ENCODE measurements at regions of chr3 and their contacts with region 1.

Region 1: DNA sequence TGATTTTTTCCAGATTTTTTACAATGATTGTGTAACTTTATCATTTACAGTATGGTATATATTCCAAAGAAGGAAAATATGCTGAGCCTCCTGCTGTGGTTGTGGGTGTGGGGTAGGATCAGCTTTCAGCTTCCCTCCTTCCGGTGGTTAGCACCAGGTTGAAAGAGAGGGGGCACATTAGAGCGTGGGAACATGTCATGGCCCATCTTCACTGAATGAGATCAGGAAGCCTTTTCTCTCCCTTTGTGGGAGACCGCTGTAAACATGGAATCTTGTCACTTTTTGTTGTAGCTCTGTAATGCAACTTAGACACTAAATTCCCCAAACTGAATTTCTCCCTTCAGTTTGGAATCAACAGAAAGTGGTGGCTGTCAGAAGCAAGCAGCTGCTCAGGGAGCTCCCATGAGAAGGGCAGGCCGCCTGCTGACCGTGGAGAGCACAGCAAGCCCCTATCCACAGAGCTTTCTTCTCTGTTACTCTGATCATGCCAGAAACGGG is 86.7 kb upstream of the LIMD1 start:
- DNase-seq: no peak
- H3K4me3 ChIP-seq: no peak overlapping the region; the same call in 1 of the 2 replicates
- H3K27ac ChIP-seq: peak overlapping the region; percentile 97
- H3K27me3 ChIP-seq: no peaks in the 10 kb centered on the region
- CTCF ChIP-seq: peak; percentile 81

Region 2: DNA sequence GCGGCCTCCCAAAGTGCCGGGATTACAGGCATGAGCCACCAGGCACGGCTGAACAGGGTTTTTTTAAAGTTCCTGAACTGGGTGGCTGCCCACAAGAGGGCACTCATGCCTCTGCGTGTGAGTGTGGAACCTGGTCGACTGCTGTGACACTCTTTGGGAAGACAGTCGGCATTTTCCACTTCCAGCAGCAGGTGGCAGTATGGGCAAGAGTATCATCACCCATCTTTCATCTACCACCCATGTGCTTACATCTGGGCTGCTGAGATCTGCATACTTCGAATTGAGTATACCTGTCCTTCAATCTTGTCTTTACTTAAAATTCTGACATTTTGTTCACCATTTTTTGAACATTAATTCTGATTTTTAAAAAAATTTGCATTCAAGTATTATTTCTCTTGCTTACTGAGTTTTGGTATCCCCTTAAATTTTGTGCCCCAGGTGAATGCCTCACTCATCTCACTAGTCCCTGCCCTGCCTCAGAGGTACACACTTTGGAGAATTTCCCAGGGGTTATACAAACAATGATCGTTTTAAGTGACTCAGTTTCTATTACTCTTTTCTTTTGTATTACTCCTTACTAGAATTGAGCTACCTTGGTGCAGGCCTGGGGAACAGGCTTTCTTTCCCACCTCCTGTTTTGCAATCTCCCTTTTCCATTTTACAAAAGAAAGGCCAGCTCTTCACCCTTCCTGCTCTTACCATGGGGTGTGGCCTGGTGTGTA is 470.0 kb before region 1 on chr3:
- CTCF ChIA-PET with region 1: interaction called, 287 read pairs
- POLR2A ChIA-PET with region 1: interaction called, 4 read pairs
- DNase-seq: peak; percentile 87
- H3K4me3 ChIP-seq: no peak overlapping the region
- H3K27ac ChIP-seq: no peak overlapping the region
- H3K27me3 ChIP-seq: no peaks in the 10 kb centered on the region
- CTCF ChIP-seq: peak; percentile 89

Region 3: DNA sequence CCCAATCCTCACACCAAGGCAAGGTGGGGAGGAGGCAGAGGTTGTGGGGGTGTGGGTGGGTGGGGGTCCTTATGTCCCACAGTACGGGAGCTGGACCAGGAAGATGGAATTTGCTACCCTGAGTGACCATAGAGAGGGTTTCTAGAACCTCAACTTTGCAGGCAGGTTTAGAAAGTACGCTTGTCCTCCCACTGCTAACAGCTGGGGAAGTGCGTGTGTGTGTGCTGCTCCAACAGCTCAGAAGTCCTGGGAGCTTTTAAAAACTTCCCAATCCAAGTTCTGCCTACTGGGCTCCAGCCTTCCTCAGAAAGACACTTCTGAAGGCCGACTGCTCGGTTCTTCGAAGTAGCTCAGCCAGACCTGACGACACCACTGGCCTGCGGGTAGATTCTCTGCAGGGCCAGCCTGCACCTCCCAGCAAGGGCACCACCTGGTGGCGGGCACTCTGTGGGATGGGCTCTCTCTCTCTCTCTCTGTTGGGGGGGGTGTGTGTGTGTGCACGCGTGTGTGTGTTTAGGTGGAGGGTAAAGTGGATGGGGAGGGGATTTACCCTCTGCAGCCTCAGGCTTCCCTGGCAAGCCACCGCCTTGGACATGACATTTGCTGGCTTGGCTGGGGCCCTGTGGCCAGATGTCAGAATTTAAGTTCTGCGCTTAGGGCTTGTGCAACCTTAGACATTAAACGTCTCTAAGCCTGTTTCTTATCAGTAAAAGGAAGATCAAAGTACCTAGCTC is 297.4 kb before region 1 on chr3:
- CTCF ChIA-PET with region 1: interaction called, 13 read pairs
- POLR2A ChIA-PET with region 1: no interaction called
- DNase-seq: peak; percentile 63
- H3K4me3 ChIP-seq: no peak overlapping the region
- H3K27ac ChIP-seq: no peak overlapping the region
- H3K27me3 ChIP-seq: no peaks in the 10 kb centered on the region
- CTCF ChIP-seq: peak; percentile 84

Region 4: DNA sequence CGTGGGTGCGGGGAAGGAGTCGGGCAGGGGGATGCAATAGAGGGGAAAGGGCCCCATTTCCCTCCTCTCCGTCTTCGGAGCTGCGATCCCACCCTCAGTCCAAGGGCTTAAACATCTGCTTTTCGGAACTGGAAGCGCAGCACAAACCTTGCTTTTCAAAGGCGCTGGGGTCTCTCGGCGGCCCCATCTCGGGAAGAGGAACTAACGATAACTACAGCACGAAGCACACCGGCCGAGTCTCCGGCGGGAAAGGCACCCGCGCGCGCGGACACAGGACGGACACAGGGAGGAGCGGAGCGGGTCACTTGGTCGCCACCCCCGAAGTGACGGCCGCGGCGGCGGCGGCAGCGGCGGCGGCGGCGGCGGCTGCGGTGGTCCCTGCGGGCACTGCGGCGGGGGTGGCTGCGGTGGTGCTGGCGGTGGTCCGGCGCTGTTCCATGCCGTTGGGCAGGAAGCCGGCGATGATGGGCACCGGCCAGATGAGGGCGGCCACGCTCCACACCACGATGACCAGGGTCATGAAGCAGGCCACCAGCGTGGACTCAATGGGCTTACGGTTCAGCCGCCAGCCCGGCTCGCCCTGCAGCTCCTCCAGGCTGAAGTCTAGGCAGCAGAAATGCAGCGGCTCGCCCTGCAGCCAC is 282.9 kb before region 1 on chr3:
- CTCF ChIA-PET with region 1: interaction called, 69 read pairs
- POLR2A ChIA-PET with region 1: interaction called, 14 read pairs
- DNase-seq: peak; percentile 50
- H3K4me3 ChIP-seq: peak overlapping the region; percentile 97
- H3K27ac ChIP-seq: peak overlapping the region; percentile 80
- H3K27me3 ChIP-seq: no peaks in the 10 kb centered on the region
- CTCF ChIP-seq: peak; percentile 51

Region 5: GRCh38 chr3:45688882-45689756 is 181.2 kb after region 1 on chr3 and contains the start of gene SACM1L:
- CTCF ChIA-PET with region 1: interaction called, 12 read pairs
- POLR2A ChIA-PET with region 1: no interaction called
- DNase-seq: peak; percentile 97
- H3K4me3 ChIP-seq: peak within 1 kb of the TSS; percentile 66
- H3K27ac ChIP-seq: peak within 1 kb of the TSS; percentile 85
- H3K27me3 ChIP-seq: no peaks in the 10 kb centered on the region
- CTCF ChIP-seq: no peak
- polyA plus RNA-seq, gene SACM1L: 26.4 and 35.5 TPM in 2 replicates

Region 6: DNA sequence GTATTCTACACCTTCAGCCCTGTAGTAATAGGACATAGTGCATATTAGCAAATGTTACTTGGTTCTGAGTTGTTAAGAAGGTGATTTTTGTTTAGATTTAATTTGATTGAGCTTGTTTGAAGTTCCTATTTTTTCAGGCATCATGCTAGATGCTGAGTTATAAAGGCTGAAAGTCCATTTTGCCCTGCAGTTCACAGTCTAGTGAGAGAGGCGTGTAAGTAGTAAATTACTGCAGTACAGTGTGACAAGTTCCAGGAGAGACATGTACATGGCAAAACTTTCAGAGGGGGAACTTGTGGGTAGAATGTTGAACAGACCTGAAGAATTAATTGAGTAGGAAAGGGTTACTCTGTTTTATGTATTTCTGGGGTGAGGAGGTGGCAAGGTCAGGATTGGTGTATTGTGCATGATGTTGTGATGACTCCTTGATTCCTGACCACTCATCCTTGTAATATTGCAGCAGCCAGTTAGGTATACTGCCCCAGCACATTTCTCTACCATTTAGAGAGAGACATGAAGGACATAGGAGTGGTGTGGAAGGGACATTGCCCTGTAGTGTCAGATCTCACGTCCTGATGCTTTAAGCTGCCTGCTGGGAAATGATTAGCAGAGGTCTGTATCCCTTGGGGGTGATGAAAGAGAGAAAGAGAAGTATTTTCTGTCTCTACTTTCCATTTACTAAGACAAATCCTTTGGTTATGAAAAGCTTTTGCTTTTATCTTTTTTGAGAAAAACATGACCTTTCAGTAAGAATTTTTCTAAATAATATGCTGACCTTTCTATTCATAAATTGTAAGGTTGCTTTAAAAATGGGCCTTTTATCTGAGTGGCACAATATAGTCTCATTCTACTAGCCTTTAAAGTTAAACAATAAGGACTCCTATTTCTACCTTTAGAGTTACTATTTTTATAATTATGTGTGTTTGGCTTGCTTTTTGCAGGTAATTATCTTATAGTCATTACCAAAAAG is 198.3 kb after region 1 on chr3:
- CTCF ChIA-PET with region 1: interaction called, 10 read pairs
- POLR2A ChIA-PET with region 1: no interaction called
- DNase-seq: no peak
- H3K4me3 ChIP-seq: no peak overlapping the region
- H3K27ac ChIP-seq: no peak overlapping the region
- H3K27me3 ChIP-seq: no peaks in the 10 kb centered on the region
- CTCF ChIP-seq: no peak

Region 7: GRCh38 chr3:45929042-45929679 is 421.3 kb after region 1 on chr3:
- CTCF ChIA-PET with region 1: interaction called, 18 read pairs
- POLR2A ChIA-PET with region 1: no interaction called
- DNase-seq: no peak
- H3K4me3 ChIP-seq: no peak overlapping the region
- H3K27ac ChIP-seq: no peak overlapping the region
- H3K27me3 ChIP-seq: no peaks in the 10 kb centered on the region
- CTCF ChIP-seq: peak; percentile 92

Measured in AG04450 (cell line).